Left ventricle myocardium inferior (tissue), 1 donor: ENCODE measurements at regions of chr5 and their contacts with region 1.

Region 1: GRCh38 chr5:180868960-180869359 is 7.9 kb upstream of the ZFP62 start:
- DNase-seq: peak; percentile 78
- H3K4me3 ChIP-seq: no peak overlapping the region
- H3K27ac ChIP-seq: no peak overlapping the region
- H3K4me1 ChIP-seq: no peaks in the 10 kb centered on the region
- H3K27me3 ChIP-seq: peaks cover 7% of the 10 kb centered on the region
- CTCF ChIP-seq: peak; percentile 79

Region 2: GRCh38 chr5:180784497-180785097 is 84.4 kb before region 1 on chr5:
- intact Hi-C with region 1: loop called (anchors 5 kb)
- DNase-seq: peak; percentile 78
- H3K4me3 ChIP-seq: no peak overlapping the region
- H3K27ac ChIP-seq: peak overlapping the region; percentile 83
- H3K4me1 ChIP-seq: peaks cover 47% of the 10 kb centered on the region
- H3K27me3 ChIP-seq: no peaks in the 10 kb centered on the region
- CTCF ChIP-seq: peak; percentile 83